A549 (cell line): ENCODE measurements at regions of chr14 and their contacts with region 1.

Region 1: GRCh38 chr14:32508281-32508680 is 179.2 kb downstream of the AKAP6 start:
- DNase-seq: no peak
- ATAC-seq: no peak
- H3K4me3 ChIP-seq: no peak overlapping the region
- H3K27ac ChIP-seq: peak overlapping the region; percentile 72 to 74; a peak in 5 of 6 replicates
- H3K4me1 ChIP-seq: peaks cover 56% of the 10 kb centered on the region
- CTCF ChIP-seq: no peak
- EP300 ChIP-seq: no peak
- POLR2A ChIP-seq: no peak
- RAD21 ChIP-seq: no peak

Region 2: DNA sequence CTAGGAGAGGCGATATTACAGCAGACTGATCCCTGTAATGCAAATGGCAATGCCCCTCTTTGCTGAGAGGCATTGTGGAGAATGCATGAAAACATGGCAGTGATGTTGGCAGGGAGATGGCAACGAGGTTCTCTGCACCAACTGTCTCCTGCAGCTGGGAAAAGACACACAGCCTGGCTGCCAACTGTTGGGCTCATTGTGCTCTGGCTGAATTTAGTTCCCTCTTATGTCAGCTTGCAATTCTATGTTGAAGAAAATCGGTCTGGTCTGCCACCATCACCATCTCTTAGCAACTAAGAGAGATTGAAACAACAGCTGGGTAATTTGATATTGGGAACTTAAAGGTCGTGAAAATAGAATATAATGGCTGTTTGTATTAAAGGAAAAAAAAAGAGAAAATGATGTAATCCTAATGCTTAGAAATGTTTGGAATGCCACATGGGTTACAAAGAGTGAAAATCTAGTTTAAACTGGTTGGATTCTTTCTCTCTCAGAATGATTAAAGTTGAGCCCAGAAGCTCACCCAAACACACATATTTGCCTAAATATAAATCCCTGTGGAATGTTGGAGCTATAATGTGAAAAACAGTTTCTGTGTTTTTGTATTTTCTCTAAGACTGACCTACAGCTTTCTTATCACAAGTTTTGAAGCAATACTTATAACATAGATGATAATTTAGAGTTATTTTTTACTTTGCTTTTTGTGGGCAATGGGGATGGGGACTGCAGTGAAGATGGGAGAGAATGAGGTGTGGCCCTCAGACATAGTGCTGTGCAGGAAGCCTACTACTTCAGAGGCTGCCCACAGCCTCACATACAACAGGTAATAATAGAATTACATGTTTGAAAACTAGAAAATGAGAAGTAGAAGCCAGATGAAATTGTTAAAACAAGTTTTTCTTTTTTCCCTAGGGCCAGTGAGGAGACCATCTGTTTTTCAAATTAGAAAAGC is 35.5 kb before region 1 on chr14:
- CTCF ChIA-PET with region 1: no interaction called
- POLR2A ChIA-PET with region 1: interaction called, 12 read pairs
- DNase-seq: peak in 1 of 2 experiments; percentile 6
- ATAC-seq: peak; percentile 41 to 71; a peak in 4 of 6 replicates
- H3K4me3 ChIP-seq: no peak overlapping the region
- H3K27ac ChIP-seq: peak overlapping the region; percentile 72 to 79
- H3K4me1 ChIP-seq: peaks cover 48% of the 10 kb centered on the region
- CTCF ChIP-seq: no peak
- EP300 ChIP-seq: no peak
- POLR2A ChIP-seq: no peak
- RAD21 ChIP-seq: no peak

Region 3: DNA sequence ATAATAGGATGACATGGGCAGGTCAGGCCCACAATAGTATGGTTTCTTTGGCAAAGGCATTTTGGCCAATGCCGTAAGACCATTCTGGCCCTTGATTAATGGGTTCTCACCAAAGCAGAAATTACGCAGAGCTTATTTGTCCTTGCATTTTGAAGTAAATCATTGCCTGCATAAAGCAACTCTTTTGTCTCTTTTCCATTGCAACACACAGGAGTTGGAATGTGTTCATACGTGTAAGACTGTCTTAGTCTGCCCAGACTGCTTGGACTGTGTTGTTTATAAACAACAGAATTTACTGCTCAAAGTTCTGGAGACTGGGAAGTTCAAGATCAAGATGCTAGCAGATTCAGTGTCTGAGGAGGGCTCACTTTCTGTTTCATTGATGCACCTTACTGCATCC is 327.6 kb after region 1 on chr14:
- CTCF ChIA-PET with region 1: no interaction called
- POLR2A ChIA-PET with region 1: no interaction called
- DNase-seq: no peak
- ATAC-seq: no peak
- H3K4me3 ChIP-seq: no peak overlapping the region
- H3K27ac ChIP-seq: no peak overlapping the region
- H3K4me1 ChIP-seq: no peaks in the 10 kb centered on the region
- CTCF ChIP-seq: no peak
- EP300 ChIP-seq: no peak
- POLR2A ChIP-seq: no peak
- RAD21 ChIP-seq: no peak